ENCODE measurements at regions of chr12 and their contacts with region 1.

Region 1: GRCh38 chr12:121793838-121794533 is 498 bp upstream of the RHOF start:
- DNase-seq: peak; percentile 75
- ATAC-seq: peak; percentile 49
- H3K4me3 ChIP-seq: peak overlapping the region; percentile 71 to 79 (median 71); a peak in 5 of 6 replicates
- H3K27ac ChIP-seq: peak overlapping the region; percentile 85
- H3K4me1 ChIP-seq: peaks cover 92% of the 10 kb centered on the region
- H3K27me3 ChIP-seq: no peaks in the 10 kb centered on the region
- CTCF ChIP-seq: peak; percentile 99
- EP300 ChIP-seq: 0 out of 4 replicates have a peak, but pooled peaks of 1 of the 2 experiments have one; percentile 10
- POLR2A ChIP-seq: peak in 1 of 2 experiments; percentile 8; a peak in 1 of 4 replicates
- RAD21 ChIP-seq: peak; percentile 98

Region 2: GRCh38 chr12:121697098-121697698 is 96.8 kb before region 1 on chr12:
- CTCF ChIA-PET with region 1: interaction called, 12 read pairs
- POLR2A ChIA-PET with region 1: no interaction called
- in situ Hi-C with region 1: no loop called
- intact Hi-C with region 1: loop called (anchors 5 kb)
- DNase-seq: peak; percentile 53
- ATAC-seq: no peak
- H3K4me3 ChIP-seq: no peak overlapping the region
- H3K27ac ChIP-seq: no peak overlapping the region
- H3K4me1 ChIP-seq: no peaks in the 10 kb centered on the region
- H3K27me3 ChIP-seq: peaks cover 0 to 8% of the 10 kb centered on the region in 2 experiments; a peak in 1 of 5 replicates
- CTCF ChIP-seq: peak; percentile 65
- EP300 ChIP-seq: no peak
- POLR2A ChIP-seq: no peak
- RAD21 ChIP-seq: peak; percentile 64

Region 3: DNA sequence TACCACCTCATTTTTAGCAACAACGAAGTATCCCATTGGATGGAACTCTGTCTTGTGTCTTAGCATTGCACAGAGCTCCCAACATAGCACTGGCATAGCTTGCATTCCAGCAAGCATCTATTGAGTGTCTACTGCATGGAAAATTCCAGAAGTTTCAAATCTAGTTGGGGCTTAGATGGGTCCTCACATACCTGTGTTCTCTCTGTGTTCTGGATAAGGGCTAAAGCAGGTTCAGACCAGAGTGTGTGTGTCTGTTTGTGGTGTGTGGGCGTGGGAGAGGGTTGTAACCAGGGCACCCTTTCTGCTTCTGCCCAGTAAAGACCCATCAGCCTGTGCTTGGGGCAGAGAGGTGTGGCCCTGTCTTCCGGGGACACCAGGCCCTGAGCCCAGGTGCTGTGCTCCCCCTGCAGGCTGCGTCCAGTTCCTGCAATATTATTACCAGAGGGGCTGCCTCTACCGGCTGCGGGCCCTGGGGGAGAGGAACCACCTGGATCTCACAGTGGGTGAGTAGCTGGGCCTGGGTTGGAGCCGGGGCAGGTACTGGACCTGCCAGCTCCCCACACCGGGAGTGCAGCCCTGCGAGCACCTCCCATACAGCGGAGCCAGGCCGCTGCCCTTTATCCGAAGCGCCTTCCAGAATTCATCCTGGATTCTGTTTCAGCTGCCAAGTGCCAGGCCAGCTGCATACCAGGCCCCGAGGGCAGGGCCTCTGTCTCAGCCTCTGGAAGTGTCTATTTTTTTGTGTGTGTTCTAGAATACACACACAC is 20.8 kb before region 1 on chr12:
- CTCF ChIA-PET with region 1: interaction called, 66 read pairs
- POLR2A ChIA-PET with region 1: interaction called, 4 read pairs
- in situ Hi-C with region 1: no loop called
- intact Hi-C with region 1: loop called (anchors 1 kb)
- DNase-seq: peak; percentile 61
- ATAC-seq: peak; percentile 62
- H3K4me3 ChIP-seq: no peak overlapping the region
- H3K27ac ChIP-seq: no peak overlapping the region
- H3K4me1 ChIP-seq: peaks cover 35% of the 10 kb centered on the region
- H3K27me3 ChIP-seq: no peaks in the 10 kb centered on the region
- CTCF ChIP-seq: peak; percentile 97
- EP300 ChIP-seq: no peak
- POLR2A ChIP-seq: no peak
- RAD21 ChIP-seq: peak; percentile 95

Region 4: DNA sequence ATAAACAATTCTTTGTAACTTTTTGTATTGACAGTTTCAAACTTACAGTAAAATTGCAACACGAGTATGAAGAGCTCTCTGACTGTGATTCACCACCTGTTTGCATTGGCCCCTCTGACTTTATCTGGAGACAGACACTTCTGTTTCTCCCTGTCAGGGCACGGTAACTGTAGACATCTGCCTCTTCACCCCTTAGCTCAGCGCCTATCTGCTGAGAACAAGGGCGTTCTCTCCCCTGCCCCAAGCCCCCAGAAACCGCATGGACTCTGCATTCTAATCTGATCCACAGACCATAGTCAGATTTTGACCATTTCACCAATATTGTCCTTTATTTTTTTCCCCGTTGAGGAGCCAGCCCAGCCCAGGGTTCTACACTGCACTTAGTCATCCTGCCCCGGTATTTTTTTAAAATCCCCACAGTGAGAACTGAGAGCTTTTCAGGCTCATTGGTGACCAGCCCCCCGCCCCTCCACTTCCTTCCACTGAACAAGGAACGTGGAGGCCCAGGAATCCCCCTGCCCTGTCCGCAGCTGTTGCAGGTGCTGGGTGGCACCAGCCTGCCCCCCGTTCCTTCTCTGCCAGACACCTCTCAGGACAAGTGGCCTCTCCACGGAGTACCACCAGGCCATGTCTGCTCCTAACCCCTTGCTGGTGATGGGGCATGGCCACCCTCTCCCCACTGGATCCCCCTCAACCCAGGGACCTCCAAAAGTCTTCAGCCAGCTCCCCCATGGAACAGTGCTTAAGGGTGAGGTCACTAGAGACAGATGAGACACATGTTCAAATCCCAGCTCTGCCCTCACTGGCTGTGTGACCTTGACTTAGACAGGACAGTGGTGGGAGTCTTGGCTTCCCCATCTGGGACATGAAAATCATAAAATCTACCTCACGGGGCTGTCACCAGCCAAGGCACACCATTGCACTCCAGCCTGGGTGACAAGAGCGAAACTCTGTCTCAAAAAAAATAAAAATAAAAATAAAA is 11.7 kb before region 1 on chr12:
- CTCF ChIA-PET with region 1: interaction called, 66 read pairs
- POLR2A ChIA-PET with region 1: interaction called, 18 read pairs
- in situ Hi-C with region 1: no loop called
- intact Hi-C with region 1: no loop called
- DNase-seq: peak; percentile 68
- ATAC-seq: peak; percentile 60
- H3K4me3 ChIP-seq: peak overlapping the region in 1 of 3 experiments; percentile 37; a peak in 2 of 6 replicates
- H3K27ac ChIP-seq: peak overlapping the region; percentile 24
- H3K4me1 ChIP-seq: peaks cover 44% of the 10 kb centered on the region
- H3K27me3 ChIP-seq: no peaks in the 10 kb centered on the region; a peak in 1 of 5 replicates
- CTCF ChIP-seq: no peak
- EP300 ChIP-seq: peak in 1 of 2 experiments; percentile 28; a peak in 1 of 4 replicates
- POLR2A ChIP-seq: no peak
- RAD21 ChIP-seq: no peak

Region 5: DNA sequence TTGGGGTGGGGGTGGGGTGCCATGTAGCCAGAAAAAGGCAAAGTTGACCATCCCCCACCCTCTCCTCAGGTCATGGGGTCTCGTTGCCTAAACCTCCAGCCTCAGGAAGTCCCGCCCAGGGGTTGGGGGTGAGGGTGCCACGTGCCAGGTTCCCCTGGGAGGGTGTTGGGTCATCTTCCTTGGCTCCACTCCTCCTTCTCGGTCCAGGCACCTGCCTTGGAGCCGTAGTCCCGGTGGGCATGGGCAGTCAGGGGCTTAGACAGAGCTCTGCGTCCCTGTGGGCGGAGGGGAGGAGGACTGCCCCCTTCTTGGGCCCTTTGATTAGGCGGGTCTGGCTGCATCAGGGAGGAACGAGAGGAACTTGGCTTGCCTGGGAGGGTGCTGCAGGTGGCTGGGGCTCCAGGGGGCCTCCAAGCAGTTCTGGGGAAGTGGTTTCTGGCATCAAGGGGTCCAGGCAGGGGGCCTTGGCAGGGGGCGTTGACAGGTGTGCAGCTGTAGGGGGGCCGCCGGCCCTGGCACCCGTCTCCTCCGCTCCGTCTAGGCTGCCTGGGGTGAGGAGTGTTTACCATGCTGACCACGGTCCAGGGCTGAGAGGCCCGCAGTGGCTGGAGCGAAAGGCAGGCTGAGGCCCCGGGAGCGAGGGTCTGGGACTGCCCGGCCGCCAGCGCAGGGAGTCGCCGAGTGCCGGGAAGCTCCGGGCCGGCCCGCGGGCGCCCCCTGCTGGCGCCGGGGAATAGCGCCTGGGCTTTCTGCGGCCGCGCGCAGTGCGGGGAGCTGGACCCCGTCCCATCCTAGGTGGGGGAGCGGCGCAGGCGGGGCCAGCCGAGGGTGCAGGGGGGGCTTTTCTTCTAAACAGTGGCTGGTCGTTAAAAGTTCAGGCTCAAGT is 17.7 kb after region 1 on chr12:
- CTCF ChIA-PET with region 1: interaction called, 89 read pairs
- POLR2A ChIA-PET with region 1: interaction called, 393 read pairs
- in situ Hi-C with region 1: no loop called
- intact Hi-C with region 1: loop called (anchors 1 kb)
- DNase-seq: peak; percentile 57
- ATAC-seq: peak; percentile 91
- H3K4me3 ChIP-seq: peak overlapping the region; percentile 62 to 71 (median 63)
- H3K27ac ChIP-seq: peak overlapping the region; percentile 57
- H3K4me1 ChIP-seq: peaks cover 38% of the 10 kb centered on the region
- H3K27me3 ChIP-seq: no peaks in the 10 kb centered on the region
- CTCF ChIP-seq: peak; percentile 70
- EP300 ChIP-seq: 0 out of 4 replicates have a peak, but pooled peaks of 1 of the 2 experiments have one; percentile 5
- POLR2A ChIP-seq: no peak
- RAD21 ChIP-seq: peak; percentile 98

Region 6: DNA sequence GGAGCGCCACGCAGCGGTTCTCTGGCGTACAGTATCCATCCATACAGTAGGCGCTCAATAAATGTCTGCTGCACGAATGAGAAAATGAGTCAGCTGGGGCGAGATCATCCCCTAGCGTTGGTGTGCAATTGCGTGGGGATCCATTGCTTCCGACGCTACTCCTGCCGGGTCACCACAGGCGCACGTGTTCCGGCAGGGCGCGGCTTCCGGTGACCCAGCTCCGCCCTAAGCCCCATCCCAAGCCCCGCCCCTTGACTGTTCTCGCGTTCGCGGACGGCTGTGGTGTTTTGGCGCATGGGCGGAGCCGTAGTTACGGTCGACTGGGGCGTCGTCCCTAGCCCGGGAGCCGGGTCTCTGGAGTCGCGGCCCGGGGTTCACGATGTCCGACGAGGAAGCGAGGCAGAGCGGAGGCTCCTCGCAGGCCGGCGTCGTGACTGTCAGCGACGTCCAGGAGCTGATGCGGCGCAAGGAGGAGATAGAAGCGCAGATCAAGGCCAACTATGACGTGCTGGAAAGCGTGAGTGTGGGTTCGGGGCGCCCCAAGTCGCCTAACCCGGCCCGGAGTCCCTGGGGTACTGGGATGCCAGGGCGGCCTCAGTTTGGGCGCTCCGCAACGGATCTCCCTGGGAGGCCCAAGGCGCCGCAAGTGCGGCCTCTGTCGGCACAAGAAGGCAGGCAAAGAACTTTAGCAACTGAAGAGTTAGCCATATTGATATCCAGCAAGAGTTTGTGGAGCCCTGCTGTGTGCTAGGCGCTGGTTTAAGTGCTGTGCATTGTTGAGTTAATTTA is 94.7 kb after region 1 on chr12 and contains the start of gene PSMD9:
- CTCF ChIA-PET with region 1: interaction called, 22 read pairs
- POLR2A ChIA-PET with region 1: interaction called, 32 read pairs
- in situ Hi-C with region 1: loop called (anchors 5 kb)
- intact Hi-C with region 1: loop called (anchors 1 kb)
- DNase-seq: peak; percentile 92
- ATAC-seq: peak; percentile 96
- H3K4me3 ChIP-seq: peak within 1 kb of the TSS; percentile 71 to 87 (median 85)
- H3K27ac ChIP-seq: peak within 1 kb of the TSS; percentile 89
- H3K4me1 ChIP-seq: peaks cover 36% of the 10 kb centered on the region
- H3K27me3 ChIP-seq: no peaks in the 10 kb centered on the region; a peak in 1 of 5 replicates
- CTCF ChIP-seq: peak; percentile 94
- EP300 ChIP-seq: peak in 1 of 2 experiments; percentile 30; a peak in 1 of 4 replicates
- POLR2A ChIP-seq: peak; percentile 74 to 80
- RAD21 ChIP-seq: peak; percentile 83
- total RNA-seq, gene PSMD9: 61.1 and 73.9 TPM in 2 replicates

Region 7: DNA sequence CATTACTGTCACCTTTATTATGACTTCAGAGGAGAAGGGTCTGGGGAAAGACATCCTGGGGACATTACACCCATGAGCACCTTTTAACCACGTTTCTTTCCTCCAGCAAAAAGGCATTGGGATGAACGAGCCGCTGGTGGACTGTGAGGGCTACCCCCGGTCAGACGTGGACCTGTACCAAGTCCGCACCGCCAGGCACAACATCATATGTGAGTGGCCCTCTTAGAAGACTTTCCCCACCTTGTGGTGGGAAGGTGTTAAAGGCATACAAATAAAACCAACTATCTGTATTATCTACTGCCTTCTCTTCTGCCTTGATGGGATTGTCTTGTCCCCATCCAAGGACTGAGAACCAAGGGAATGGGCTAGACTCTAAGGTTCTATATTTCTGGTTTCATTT is 100.6 kb after region 1 on chr12:
- CTCF ChIA-PET with region 1: interaction called, 22 read pairs
- POLR2A ChIA-PET with region 1: interaction called, 32 read pairs
- in situ Hi-C with region 1: loop called (anchors 5 kb)
- intact Hi-C with region 1: loop called (anchors 1 kb)
- DNase-seq: peak; percentile 78
- ATAC-seq: peak; percentile 94
- H3K4me3 ChIP-seq: no peak overlapping the region
- H3K27ac ChIP-seq: peak overlapping the region; percentile 52
- H3K4me1 ChIP-seq: peaks cover 29% of the 10 kb centered on the region
- H3K27me3 ChIP-seq: no peaks in the 10 kb centered on the region
- CTCF ChIP-seq: peak; percentile 70
- EP300 ChIP-seq: no peak
- POLR2A ChIP-seq: no peak
- RAD21 ChIP-seq: 0 out of 2 replicates have a peak, but pooled peaks have one; percentile 47